Posterior cingulate gyrus (tissue), 11 donors: ENCODE measurements at regions of chr7 and their contacts with region 1.

Region 1: GRCh38 chr7:6160191-6160623 is 112.2 kb downstream of the CYTH3 start:
- DNase-seq: peak; percentile 45 to 95 (median 66)

Region 2: GRCh38 chr7:5872326-5872725 is 287.9 kb before region 1 on chr7:
- intact Hi-C with region 1: no loop called
- DNase-seq: peak in 3 of 10 donors; percentile 36 to 51 (median 40)

Region 3: DNA sequence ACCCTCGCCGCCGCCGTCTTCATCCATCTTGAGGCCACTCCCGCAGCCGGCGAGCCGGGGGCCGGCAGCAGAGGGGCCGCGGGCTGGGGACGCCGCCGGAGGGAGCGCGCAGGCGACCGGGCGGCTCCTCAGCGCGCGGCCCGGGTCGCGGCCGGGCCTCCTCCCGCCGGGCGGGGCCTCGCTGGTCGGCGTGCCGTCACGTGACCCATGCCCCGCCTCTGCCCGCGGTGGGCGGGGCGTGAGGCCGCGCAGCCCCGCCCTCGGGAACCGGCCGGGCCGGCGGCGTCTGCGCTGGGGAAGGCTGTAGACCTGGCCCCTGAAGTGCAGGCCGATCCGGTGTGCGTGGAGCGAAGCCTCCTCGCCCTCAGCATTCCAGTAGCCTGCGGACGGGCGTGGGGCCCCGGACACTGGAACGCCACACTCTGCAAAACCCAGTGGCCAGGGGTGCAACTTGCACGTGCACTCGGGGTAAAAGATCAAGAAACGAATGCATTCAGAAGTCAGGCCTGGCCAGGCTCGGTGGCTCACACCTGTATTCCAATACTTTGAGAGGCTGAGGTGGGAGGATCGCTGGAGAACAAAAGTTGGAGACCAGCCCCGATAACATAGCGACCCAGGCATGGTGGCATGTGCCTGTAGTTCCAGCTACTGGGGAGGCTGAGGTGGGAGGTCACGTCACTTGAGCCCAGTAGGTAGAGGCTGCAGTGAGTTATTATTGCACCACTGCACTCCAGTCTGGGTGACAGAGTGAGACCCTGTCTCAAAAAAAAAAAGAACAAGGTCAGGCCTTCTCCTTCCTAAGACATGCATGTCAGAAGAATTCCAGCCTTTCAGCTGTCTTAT is 112.5 kb after region 1 on chr7 and contains the start of gene CYTH3:
- intact Hi-C with region 1: loop called (anchors 5 kb)
- DNase-seq: peak; percentile 68 to 98 (median 80)

Region 4: DNA sequence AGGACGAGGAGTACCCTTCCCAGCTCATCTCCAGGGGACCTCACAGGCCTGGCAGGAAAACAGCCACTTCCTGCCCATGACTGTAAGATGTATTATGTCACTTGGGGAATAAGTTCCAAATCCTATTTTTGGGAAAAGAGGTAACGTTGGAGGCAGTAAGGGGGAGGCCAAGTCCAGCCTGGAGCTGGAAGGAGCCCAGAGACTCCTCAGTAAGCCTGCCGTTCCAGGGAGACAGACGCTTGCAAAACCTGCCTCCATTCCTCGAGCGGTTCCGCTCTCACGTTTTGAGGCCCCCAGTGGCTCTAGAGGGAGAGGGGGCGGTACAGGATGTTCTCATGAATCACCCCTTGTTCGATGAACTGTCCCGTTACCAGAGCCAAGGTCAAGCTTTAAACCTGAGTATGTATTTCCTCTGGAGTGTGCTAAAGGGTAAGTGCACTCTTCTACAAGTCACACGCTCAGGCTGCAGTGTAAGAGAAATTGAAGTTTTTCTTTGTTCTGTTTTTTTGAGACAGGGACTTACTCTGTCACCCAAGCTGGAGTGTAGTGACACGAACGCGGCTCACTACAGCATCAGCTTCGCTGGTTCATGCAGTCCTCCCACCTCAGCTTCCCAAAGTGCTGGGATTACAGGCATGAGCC is 157.7 kb after region 1 on chr7:
- intact Hi-C with region 1: loop called (anchors 1 kb)
- DNase-seq: peak in 4 of 10 donors; percentile 9 to 85 (median 42)